Testis (tissue), 5 donors: ENCODE measurements at regions of chr4 and their contacts with region 1.

Region 1: GRCh38 chr4:10403633-10404445 is 53.4 kb downstream of the ZNF518B start:
- DNase-seq: peak; percentile 23
- H3K4me3 ChIP-seq: no peak overlapping the region
- H3K27ac ChIP-seq: no peak overlapping the region
- H3K4me1 ChIP-seq: no peaks in the 10 kb centered on the region
- H3K27me3 ChIP-seq: no peaks in the 10 kb centered on the region
- CTCF ChIP-seq: peak in 2 of 3 experiments; percentile 20 to 26
- POLR2A ChIP-seq: no peak

Region 2: GRCh38 chr4:10157478-10158332 is 246.1 kb before region 1 on chr4:
- intact Hi-C with region 1: loop called (anchors 5 kb)
- DNase-seq: peak; percentile 70
- H3K4me3 ChIP-seq: no peak overlapping the region
- H3K27ac ChIP-seq: no peak overlapping the region
- H3K4me1 ChIP-seq: no peaks in the 10 kb centered on the region
- H3K27me3 ChIP-seq: no peaks in the 10 kb centered on the region
- CTCF ChIP-seq: peak; percentile 65 to 72 (median 70)
- POLR2A ChIP-seq: no peak

Region 3: GRCh38 chr4:10622728-10623127 is 218.9 kb after region 1 on chr4:
- intact Hi-C with region 1: no loop called
- DNase-seq: no peak
- H3K4me3 ChIP-seq: no peak overlapping the region
- H3K27ac ChIP-seq: no peak overlapping the region
- H3K4me1 ChIP-seq: peaks cover 5% of the 10 kb centered on the region
- H3K27me3 ChIP-seq: no peaks in the 10 kb centered on the region
- CTCF ChIP-seq: peak in 1 of 3 experiments; percentile 16
- POLR2A ChIP-seq: no peak